ENCODE measurements at regions of chr4 and their contacts with region 1.

Region 1: DNA sequence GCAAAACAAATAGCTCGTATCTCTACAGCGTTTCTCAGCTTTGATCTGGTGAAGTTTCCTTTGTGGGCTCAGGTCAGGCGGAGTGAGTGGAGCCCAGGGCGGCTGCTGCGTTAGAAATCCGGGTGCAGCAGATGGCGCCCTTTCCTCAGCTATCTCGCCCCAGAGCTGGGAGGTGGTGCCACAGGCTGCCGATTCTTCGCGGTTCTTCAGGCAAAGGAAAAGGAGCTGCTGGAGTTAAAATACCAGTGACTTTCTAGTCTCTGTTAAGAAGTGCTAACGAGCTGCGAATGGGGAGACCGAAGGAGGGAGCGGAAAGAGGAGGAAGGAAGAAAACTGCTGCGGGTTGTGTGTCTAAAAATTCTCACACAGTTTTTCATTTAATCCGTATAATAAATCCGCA is 114.6 kb downstream of the CPE start:
- DNase-seq: peak in 1 of 2 experiments; percentile 70
- H3K4me3 ChIP-seq: no peak overlapping the region
- H3K27ac ChIP-seq: no peak overlapping the region
- H3K4me1 ChIP-seq: no peaks in the 10 kb centered on the region
- H3K27me3 ChIP-seq: no peaks in the 10 kb centered on the region
- CTCF ChIP-seq: peak; percentile 76

Region 2: DNA sequence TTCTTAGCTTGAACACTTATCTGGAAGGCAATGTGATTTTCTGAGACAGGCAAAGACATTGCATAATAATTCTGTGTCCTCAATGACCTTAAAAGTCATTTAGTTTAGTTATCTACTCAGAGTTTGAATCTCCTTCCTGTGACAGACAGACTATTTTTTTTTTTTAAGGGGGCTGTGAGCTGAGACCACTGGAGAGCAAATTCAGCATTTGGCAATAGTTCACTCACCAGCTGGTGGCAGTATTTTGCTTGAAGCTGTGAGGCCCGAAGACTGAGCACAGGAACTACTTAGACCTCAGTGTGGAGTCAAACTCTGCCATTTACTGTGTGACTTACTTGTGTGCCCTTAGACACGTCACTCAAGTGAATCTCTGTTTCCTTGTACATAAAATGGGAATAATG is 137.5 kb before region 1 on chr4:
- CTCF ChIA-PET with region 1: interaction called, 10 read pairs
- POLR2A ChIA-PET with region 1: no interaction called
- intact Hi-C with region 1: no loop called
- DNase-seq: no peak
- H3K4me3 ChIP-seq: no peak overlapping the region
- H3K27ac ChIP-seq: no peak overlapping the region
- H3K4me1 ChIP-seq: peaks cover 6% of the 10 kb centered on the region; the same call in 1 of the 2 replicates
- H3K27me3 ChIP-seq: no peaks in the 10 kb centered on the region
- CTCF ChIP-seq: peak; percentile 43; the same call in 1 of the 2 replicates

Region 3: DNA sequence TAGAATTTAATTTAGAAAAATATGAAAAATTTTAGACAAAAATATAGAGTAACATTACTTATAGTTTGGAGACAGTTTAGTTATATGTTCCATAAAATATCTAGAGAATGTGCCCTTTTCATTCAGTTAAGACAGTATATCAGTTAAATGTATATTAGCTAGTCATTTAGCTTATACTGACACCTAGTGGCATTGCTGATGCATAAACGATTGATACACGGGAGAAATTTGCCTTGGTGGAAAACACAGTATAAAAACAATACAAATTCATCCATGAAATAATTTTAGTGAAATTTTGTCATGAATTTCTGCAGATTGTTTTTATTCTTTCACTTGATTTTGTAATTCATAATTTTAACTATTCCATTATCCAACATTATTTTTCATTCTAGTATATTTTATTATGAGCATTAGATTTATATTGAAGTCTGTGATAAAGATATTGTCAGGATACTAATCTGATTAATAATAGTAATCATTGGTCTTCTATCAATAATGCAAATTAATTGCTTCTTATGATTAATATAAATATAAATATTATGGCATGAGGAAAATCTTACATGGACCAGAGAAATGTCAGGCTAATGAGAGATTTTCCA is 598.7 kb after region 1 on chr4:
- CTCF ChIA-PET with region 1: interaction called, 5 read pairs
- POLR2A ChIA-PET with region 1: no interaction called
- intact Hi-C with region 1: loop called (anchors 1 kb)
- DNase-seq: no peak
- H3K4me3 ChIP-seq: no peak overlapping the region
- H3K27ac ChIP-seq: no peak overlapping the region
- H3K4me1 ChIP-seq: no peaks in the 10 kb centered on the region
- H3K27me3 ChIP-seq: no peaks in the 10 kb centered on the region
- CTCF ChIP-seq: peak; percentile 73